ENCODE measurements at regions of chr2 and their contacts with region 1.

Region 1: GRCh38 chr2:40160751-40161218 is 291.1 kb downstream of the SLC8A1 start:
- DNase-seq: peak; percentile 87
- H3K4me3 ChIP-seq: peak overlapping the region; percentile 21
- H3K27ac ChIP-seq: peak overlapping the region; percentile 93
- H3K4me1 ChIP-seq: peaks cover 64% of the 10 kb centered on the region
- CTCF ChIP-seq: 0 out of 2 replicates have a peak, but pooled peaks have one; percentile 18

Region 2: GRCh38 chr2:40028792-40029488 is 131.8 kb before region 1 on chr2:
- CTCF ChIA-PET with region 1: no interaction called
- POLR2A ChIA-PET with region 1: no interaction called
- intact Hi-C with region 1: loop called (anchors 5 kb)
- DNase-seq: peak; percentile 82
- H3K4me3 ChIP-seq: peak overlapping the region; percentile 15
- H3K27ac ChIP-seq: peak overlapping the region; percentile 81
- H3K4me1 ChIP-seq: peaks cover 26% of the 10 kb centered on the region
- CTCF ChIP-seq: no peak

Region 3: DNA sequence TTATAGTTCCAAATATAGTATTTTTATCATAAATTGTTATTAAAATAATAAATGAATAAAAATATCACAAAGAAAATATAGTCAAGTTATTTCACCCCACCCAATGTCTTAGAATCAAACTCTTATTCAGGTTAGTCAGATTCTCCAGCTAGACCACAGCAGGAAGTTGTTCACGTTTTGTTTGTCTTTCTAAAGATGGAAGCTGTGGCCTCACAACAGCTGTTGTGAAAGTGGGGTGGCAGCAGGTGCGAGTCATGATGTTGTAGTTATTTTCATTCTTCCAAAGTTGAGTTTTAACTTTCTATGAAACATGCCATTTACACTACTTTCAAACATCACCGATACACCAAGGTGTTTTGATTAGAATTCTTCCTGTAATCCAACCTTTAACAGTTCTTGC is 18.2 kb after region 1 on chr2:
- CTCF ChIA-PET with region 1: no interaction called
- POLR2A ChIA-PET with region 1: interaction called, 4 read pairs
- intact Hi-C with region 1: loop called (anchors 2 kb)
- DNase-seq: peak; percentile 83
- H3K4me3 ChIP-seq: peak overlapping the region; percentile 35
- H3K27ac ChIP-seq: peak overlapping the region; percentile 71
- H3K4me1 ChIP-seq: peaks cover 34% of the 10 kb centered on the region
- CTCF ChIP-seq: no peak